ENCODE measurements at regions of chr3 and their contacts with region 1.

Region 1: DNA sequence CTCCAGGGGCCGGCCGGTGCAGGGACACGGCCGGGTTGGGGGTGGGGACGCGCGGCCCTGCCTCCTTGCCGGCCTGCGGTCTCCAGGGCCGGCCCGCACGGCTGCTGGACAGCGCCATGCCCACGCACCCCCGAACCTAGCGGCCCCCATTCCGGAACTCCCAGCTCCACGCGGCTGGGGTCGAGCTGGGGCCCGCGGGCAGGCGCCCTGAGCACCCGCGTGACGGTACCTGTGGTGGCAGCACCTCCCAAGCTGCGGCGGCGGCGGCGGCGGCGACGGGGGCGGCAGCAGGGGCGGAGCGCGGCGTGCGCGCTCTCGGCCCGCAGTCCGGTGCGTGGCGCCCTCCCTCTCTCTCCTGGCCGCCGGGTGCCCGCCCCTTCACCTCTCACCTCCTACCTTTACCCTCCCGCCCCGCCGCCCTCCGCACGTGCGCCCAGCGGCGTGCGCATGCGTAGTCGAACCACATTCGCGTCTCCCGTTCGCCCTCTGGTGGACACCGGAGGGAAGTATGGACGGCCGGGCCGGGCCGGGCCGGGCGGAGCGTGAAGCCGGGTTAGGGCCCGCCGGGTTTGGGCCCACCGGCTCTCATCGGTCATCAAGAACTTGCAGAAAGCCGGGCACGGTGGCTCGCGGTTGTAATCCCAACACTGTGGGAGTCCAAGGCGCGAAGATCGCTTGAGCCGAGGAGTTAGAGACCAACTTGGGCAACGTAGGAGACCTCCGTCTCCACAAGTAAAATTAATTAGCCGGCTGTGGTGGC is at the start of gene SCAP:
- DNase-seq: peak; percentile 85
- H3K27ac ChIP-seq: peak within 1 kb of the TSS; percentile 82
- CTCF ChIP-seq: peak; percentile 89

Region 2: DNA sequence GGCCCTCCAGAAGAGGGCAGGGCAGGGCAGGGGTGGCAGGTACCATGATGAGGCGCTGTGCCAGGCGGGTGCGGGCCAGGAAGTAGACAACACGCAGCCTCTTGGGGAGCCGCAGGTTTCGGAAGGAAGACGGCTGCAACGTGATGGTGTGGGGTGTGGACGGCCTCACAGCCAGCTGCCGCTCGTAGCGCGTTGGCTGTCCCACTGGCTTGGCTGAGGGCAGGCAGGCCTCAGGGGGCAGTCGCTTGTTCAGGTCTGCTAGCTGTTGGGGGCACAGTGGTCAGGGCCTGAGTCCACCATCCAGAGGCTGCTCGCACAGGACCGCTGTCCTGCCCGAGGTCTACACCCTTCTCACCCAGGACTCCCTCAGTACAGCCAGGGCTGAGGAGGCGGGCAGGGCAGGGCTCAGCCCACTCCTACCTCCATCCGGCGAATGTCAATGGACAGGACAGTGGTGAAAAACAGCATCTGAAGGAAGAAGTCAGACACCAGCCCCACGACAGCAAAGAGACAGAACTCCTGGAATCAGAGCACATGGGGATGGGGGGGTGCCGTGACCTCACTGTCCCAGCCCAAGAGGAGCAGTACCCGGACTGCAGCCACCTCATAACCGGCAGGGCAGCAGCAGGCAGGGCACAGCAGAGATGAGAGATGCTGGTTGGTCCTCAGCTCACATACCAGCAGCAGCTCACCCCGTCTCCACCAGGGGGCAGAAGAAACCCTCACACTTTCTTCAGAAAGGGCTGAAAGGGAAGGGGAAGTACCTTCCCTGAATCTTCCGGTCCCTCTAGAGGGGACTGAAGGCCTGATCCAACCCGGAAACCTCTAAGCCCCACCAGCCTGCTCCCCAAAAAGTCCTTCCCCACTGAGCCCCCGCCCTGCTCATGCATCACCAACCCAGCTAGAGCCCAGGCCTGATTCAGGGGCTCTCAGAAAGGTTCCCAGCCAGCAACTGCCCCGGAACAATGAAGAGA is 55.0 kb before region 1 on chr3:
- CTCF ChIA-PET with region 1: interaction called, 14 read pairs
- POLR2A ChIA-PET with region 1: no interaction called
- DNase-seq: peak; percentile 72
- H3K27ac ChIP-seq: peak overlapping the region; percentile 78
- CTCF ChIP-seq: peak; percentile 87

Region 3: GRCh38 chr3:48180531-48181253 is 704.9 kb after region 1 on chr3:
- CTCF ChIA-PET with region 1: no interaction called
- POLR2A ChIA-PET with region 1: no interaction called
- DNase-seq: no peak
- H3K27ac ChIP-seq: no peak overlapping the region
- CTCF ChIP-seq: no peak